Naive thymus-derived CD4-positive, alpha-beta T cell (primary cell): ENCODE measurements at regions of chr1 and their contacts with region 1.

Region 1: DNA sequence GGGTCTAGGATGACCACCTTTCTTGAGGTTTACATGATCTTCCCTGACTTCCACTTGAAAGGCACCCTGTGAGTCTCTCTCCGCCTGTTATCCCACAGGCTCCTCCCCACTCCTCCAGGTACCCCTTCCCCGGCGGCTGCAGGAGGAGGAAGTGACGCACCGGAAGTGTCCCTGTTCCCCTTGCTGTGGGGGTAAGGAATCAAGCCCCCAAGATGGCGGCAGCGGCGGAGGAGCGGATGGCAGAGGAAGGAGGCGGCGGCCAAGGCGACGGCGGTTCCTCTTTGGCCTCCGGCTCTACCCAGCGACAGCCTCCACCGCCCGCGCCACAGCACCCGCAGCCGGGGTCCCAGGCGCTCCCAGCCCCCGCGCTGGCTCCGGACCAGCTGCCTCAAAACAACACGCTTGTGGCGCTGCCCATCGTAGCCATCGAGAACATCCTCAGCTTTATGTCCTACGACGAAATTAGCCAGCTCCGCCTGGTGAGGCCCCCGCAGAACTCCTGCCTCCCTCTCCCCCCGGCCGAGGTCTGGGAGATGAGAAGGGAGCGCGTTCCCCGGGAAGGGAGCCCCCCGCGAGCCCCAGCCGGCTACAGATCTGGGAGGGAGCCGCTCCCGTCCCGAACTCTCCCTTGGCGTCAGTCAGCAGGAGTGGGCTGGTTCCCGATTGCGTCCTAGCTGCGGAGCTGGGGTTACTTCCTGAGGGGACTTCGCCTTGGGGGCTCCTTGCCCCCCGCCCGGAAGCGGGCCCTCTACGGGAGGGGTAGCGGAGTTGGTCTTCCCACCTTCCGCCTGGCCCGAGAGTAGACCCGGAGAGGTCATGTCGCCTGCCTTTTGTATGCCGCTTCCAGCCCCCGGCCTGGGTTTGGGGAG is at the start of gene FBXO28:
- DNase-seq: peak; percentile 69 to 94 (median 88)
- ATAC-seq: peak; percentile 96
- H3K4me3 ChIP-seq: peak within 1 kb of the TSS; percentile 92
- H3K4me3 Mint-ChIP-seq: peak within 1 kb of the TSS; percentile 89 to 96 (median 92)
- H3K27ac ChIP-seq: peak within 1 kb of the TSS; percentile 92
- H3K27ac Mint-ChIP-seq: peak within 1 kb of the TSS; percentile 89 to 96 (median 94)
- H3K4me1 ChIP-seq: peaks cover 4 to 14% of the 10 kb centered on the region in 2 donors
- H3K4me1 Mint-ChIP-seq: peaks cover 11 to 41% (median 30%) of the 10 kb centered on the region in 7 donors
- H3K27me3 ChIP-seq: no peaks in the 10 kb centered on the region
- H3K27me3 Mint-ChIP-seq: peaks cover 0 to 26% (median 11%) of the 10 kb centered on the region in 5 donors
- total RNA-seq, gene FBXO28: 25.2 to 37.8 (median 26.5) TPM

Region 2: GRCh38 chr1:223700942-223701637 is 413.1 kb before region 1 on chr1:
- CTCF ChIA-PET with region 1: no interaction called
- POLR2A ChIA-PET with region 1: interaction called, 3 read pairs
- intact Hi-C with region 1: loop called (anchors 1 to 5 kb)
- DNase-seq: peak in 1 of 9 donors; percentile 41
- ATAC-seq: peak; percentile 32
- H3K4me3 ChIP-seq: no peak overlapping the region
- H3K4me3 Mint-ChIP-seq: no peak overlapping the region
- H3K27ac ChIP-seq: no peak overlapping the region
- H3K27ac Mint-ChIP-seq: no peak overlapping the region
- H3K4me1 ChIP-seq: no peaks in the 10 kb centered on the region
- H3K4me1 Mint-ChIP-seq: peaks cover 0 to 15% (median 6%) of the 10 kb centered on the region in 7 donors
- H3K27me3 ChIP-seq: no peaks in the 10 kb centered on the region
- H3K27me3 Mint-ChIP-seq: peaks cover 0 to 11% (median 0%) of the 10 kb centered on the region in 5 donors

Region 3: GRCh38 chr1:223878598-223879325 is 235.4 kb before region 1 on chr1:
- CTCF ChIA-PET with region 1: no interaction called
- POLR2A ChIA-PET with region 1: no interaction called
- intact Hi-C with region 1: no loop called
- DNase-seq: no peak
- ATAC-seq: no peak
- H3K4me3 ChIP-seq: no peak overlapping the region
- H3K4me3 Mint-ChIP-seq: no peak overlapping the region
- H3K27ac ChIP-seq: no peak overlapping the region
- H3K27ac Mint-ChIP-seq: no peak overlapping the region
- H3K4me1 ChIP-seq: no peaks in the 10 kb centered on the region
- H3K4me1 Mint-ChIP-seq: no peaks in the 10 kb centered on the region
- H3K27me3 ChIP-seq: no peaks in the 10 kb centered on the region
- H3K27me3 Mint-ChIP-seq: peaks cover 0 to 26% (median 10%) of the 10 kb centered on the region in 5 donors

Region 4: DNA sequence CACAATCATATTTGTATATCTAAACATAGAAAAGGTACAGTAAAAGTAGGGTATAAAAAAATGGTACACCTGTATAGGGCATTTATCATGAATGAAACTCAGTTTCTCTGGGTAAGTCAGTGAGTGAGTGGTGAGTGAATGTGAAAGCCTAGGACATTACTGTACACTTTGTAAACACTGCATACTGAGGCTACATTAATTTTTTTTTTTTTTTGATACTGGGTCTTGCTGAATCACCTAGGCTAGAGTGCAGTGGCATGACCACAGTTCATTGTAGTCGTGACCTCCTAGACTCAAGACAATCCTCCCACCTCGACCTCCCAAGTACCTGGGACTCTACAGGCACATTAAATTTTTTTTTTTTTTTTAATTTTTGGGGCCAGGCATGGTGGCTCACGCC is 27.5 kb after region 1 on chr1:
- CTCF ChIA-PET with region 1: no interaction called
- POLR2A ChIA-PET with region 1: no interaction called
- intact Hi-C with region 1: no loop called
- DNase-seq: no peak
- ATAC-seq: no peak
- H3K4me3 ChIP-seq: no peak overlapping the region
- H3K4me3 Mint-ChIP-seq: no peak overlapping the region
- H3K27ac ChIP-seq: no peak overlapping the region
- H3K27ac Mint-ChIP-seq: no peak overlapping the region
- H3K4me1 ChIP-seq: no peaks in the 10 kb centered on the region
- H3K4me1 Mint-ChIP-seq: no peaks in the 10 kb centered on the region
- H3K27me3 ChIP-seq: no peaks in the 10 kb centered on the region
- H3K27me3 Mint-ChIP-seq: no peaks in the 10 kb centered on the region

Region 5: GRCh38 chr1:224245188-224245587 is 131.0 kb after region 1 on chr1:
- CTCF ChIA-PET with region 1: no interaction called
- POLR2A ChIA-PET with region 1: no interaction called
- intact Hi-C with region 1: loop called in 1 of 2 experiments (anchors 5 kb)
- DNase-seq: peak in 6 of 9 donors; percentile 17 to 62 (median 47)
- ATAC-seq: peak; percentile 85
- H3K4me3 ChIP-seq: no peak overlapping the region
- H3K4me3 Mint-ChIP-seq: peak overlapping the region; percentile 53 to 79 (median 62)
- H3K27ac ChIP-seq: peak overlapping the region; percentile 48
- H3K27ac Mint-ChIP-seq: peak overlapping the region; percentile 85 to 97 (median 94)
- H3K4me1 ChIP-seq: peaks cover 10 to 20% of the 10 kb centered on the region in 2 donors
- H3K4me1 Mint-ChIP-seq: peaks cover 0 to 30% (median 29%) of the 10 kb centered on the region in 7 donors
- H3K27me3 ChIP-seq: no peaks in the 10 kb centered on the region
- H3K27me3 Mint-ChIP-seq: no peaks in the 10 kb centered on the region

Region 6: DNA sequence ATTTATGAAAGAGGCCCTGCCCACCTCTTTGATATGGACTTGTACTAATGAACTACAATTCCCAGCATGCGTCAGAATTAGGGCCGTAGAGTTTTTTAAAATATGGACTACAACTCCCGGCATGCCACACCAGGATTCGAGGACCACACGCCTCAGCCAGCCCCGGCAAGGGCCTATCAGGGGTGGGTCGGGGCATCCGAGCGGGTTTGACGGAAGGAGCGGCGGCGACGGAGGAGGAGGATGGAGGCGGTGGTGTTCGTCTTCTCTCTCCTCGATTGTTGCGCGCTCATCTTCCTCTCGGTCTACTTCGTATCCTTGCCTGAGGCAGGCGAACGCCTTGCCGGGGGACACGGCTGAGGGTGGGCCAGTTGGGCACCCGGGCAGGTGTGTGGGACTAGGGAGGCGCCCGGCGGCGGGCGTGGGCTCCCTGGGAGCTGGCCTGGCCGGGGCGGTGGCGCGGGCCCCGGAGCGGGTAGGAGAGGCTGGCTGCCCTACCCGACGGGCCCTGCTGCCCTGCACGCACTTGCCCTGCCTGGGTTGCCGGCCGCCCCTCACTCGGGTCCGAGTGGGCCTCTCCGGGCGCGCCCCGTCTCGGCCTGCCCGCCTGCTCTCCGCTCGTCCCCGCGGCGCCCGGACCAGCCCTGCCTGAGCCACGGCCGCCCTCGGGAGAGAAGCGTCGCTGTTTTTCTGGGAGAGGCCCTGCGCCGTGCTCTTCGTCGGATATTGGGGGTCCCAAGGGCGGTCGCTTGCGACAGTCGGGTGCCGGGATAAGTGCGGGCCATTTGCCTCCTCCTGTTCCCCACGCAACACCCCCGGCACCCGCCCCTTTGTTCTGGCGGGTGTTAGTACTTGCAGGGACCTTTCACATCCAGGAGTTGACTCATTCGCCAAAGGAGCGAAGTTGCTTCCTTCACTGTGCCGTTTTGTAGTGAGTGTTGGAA is 242.8 kb after region 1 on chr1 and contains the start of gene CNIH4:
- CTCF ChIA-PET with region 1: interaction called, 3 read pairs
- POLR2A ChIA-PET with region 1: no interaction called
- intact Hi-C with region 1: loop called (anchors 1 kb)
- DNase-seq: peak; percentile 79 to 95 (median 92)
- ATAC-seq: peak; percentile 99
- H3K4me3 ChIP-seq: peak within 1 kb of the TSS; percentile 67
- H3K4me3 Mint-ChIP-seq: peak within 1 kb of the TSS; percentile 87 to 98 (median 94)
- H3K27ac ChIP-seq: peak within 1 kb of the TSS; percentile 83
- H3K27ac Mint-ChIP-seq: peak within 1 kb of the TSS; percentile 71 to 95 (median 89)
- H3K4me1 ChIP-seq: peaks cover 16 to 27% of the 10 kb centered on the region in 2 donors
- H3K4me1 Mint-ChIP-seq: peaks cover 23 to 58% (median 44%) of the 10 kb centered on the region in 7 donors
- H3K27me3 ChIP-seq: no peaks in the 10 kb centered on the region
- H3K27me3 Mint-ChIP-seq: no peaks in the 10 kb centered on the region
- total RNA-seq, gene CNIH4: 28.1 to 42.0 (median 39.8) TPM

Region 7: DNA sequence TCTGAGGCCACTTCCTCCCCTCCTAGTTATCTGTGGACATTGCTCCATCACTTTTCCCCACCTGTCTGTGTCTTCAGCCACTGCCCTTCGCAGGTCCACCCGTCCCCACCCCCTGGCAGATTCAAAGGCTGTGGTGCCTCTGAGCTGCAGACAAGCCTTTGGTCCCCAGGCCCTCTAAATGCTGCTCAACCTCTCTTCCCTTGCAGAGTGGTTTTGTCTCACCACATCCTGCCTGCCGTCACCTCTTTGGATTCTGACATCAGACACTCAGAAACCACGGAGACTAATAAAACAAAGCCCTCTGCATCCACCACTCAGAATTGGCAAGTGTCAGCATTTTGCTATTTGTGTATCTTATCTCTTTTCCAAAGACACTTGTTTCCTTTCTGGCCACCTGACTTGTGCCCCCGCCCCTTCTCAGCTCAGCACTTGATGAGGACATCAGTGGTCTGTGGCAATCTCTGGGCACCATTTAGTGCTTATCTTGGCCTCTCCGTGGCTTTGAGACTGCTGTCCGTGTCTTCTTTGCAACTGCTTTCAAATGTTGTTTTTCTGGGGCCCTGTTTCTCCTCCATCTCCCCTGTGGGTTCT is 509.7 kb after region 1 on chr1:
- CTCF ChIA-PET with region 1: no interaction called
- POLR2A ChIA-PET with region 1: no interaction called
- intact Hi-C with region 1: loop called in 1 of 2 experiments (anchors 2 kb)
- DNase-seq: peak in 8 of 9 donors; percentile 70 to 89 (median 83)
- ATAC-seq: peak; percentile 93
- H3K4me3 ChIP-seq: peak overlapping the region; percentile 40
- H3K4me3 Mint-ChIP-seq: peak overlapping the region; percentile 58 to 80 (median 72)
- H3K27ac ChIP-seq: no peak overlapping the region
- H3K27ac Mint-ChIP-seq: peak overlapping the region; percentile 66 to 95 (median 90)
- H3K4me1 ChIP-seq: peaks cover 18 to 25% of the 10 kb centered on the region in 2 donors
- H3K4me1 Mint-ChIP-seq: peaks cover 22 to 47% (median 31%) of the 10 kb centered on the region in 7 donors
- H3K27me3 ChIP-seq: no peaks in the 10 kb centered on the region
- H3K27me3 Mint-ChIP-seq: peaks cover 40 to 45% (median 44%) of the 10 kb centered on the region in 5 donors